Tibial artery (tissue), 4 donors: ENCODE measurements at regions of chr12 and their contacts with region 1.

Region 1: DNA sequence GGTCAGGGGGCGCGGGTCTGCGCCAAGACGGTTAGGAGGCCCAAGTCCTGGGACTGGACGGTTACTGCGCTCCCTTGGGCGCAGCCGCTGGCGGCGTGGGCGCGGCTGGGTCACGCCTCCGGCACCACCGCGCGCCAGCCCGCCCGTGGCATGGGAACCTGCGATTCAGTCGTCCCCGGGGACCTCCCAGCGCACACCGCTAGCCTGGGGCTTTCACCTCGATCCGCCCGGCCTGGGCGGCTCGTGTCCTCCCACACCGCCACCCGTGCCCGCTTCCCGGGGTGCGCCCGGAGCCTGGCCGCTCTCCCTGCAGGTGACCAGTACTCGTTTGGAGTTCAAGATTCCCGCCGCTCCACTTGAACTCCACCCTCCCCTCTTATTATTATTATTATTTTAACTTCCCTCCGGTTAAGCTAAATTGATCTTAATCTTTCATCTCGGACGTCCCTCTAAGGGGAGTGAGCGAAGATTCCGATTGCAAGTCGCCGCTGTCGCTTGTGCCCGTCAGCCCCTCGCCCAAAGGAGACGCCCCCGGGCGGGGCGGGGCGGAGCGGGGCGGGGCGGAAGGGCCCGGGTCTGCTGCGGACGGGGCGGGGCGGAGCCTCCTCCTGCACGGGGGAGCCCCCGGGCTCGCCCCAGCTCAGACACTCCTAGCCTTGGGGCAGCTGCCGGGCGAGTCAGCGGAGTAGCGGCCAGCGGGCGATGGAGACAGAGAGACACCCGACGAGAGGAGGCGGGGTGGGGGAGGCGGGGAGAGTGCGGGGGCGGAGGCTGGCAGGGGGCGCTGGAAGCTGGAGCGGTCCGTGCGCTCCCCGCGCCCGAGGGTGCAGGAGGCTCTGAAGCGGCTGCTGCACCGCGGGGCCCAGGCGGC is at the start of gene KCNMB4:
- DNase-seq: peak; percentile 54 to 77
- H3K4me3 ChIP-seq: peak within 1 kb of the TSS; percentile 83 to 92
- H3K27ac ChIP-seq: peak within 1 kb of the TSS; percentile 68 to 77
- H3K4me1 ChIP-seq: peaks cover 0 to 24% (median 6%) of the 10 kb centered on the region in 4 donors
- H3K27me3 ChIP-seq: no peaks in the 10 kb centered on the region
- CTCF ChIP-seq: no peak

Region 2: GRCh38 chr12:69900720-69901131 is 465.2 kb before region 1 on chr12:
- intact Hi-C with region 1: loop called (anchors 10 kb)
- DNase-seq: peak; percentile 70 to 75
- H3K4me3 ChIP-seq: no peak overlapping the region
- H3K27ac ChIP-seq: no peak overlapping the region
- H3K4me1 ChIP-seq: peaks cover 0 to 33% (median 17%) of the 10 kb centered on the region in 4 donors
- H3K27me3 ChIP-seq: no peaks in the 10 kb centered on the region
- CTCF ChIP-seq: peak; percentile 74 to 88

Region 3: DNA sequence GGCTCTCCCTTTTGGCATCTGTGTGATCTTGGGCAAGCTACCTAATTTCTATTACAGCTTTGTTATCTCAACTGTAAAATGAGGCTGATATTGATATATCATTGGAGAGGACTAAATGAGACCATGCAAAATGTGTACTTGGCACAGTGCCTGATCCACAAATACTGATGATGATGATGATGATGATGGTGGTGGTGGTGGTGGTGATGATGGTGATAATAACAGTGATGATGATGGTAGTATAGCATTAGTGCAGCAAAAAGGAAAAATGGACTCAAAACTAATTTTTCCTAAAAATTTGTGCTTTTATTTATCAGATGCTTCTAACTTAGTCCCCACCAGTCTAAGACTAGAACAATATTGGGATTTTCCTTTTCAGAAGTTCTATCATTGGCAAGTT is 71.0 kb after region 1 on chr12:
- intact Hi-C with region 1: no loop called
- DNase-seq: no peak
- H3K4me3 ChIP-seq: no peak overlapping the region
- H3K27ac ChIP-seq: no peak overlapping the region
- H3K4me1 ChIP-seq: no peaks in the 10 kb centered on the region
- H3K27me3 ChIP-seq: no peaks in the 10 kb centered on the region
- CTCF ChIP-seq: no peak